Keratinocyte (primary cell): ENCODE measurements at regions of chr9 and their contacts with region 1.

Region 1: GRCh38 chr9:94213511-94214124 is 45.5 kb upstream of the ZNF169 start:
- DNase-seq: peak; percentile 11
- H3K4me3 ChIP-seq: no peak overlapping the region
- H3K27ac ChIP-seq: no peak overlapping the region
- H3K4me1 ChIP-seq: no peaks in the 10 kb centered on the region
- H3K27me3 ChIP-seq: no peaks in the 10 kb centered on the region
- CTCF ChIP-seq: peak; percentile 55 to 92 (median 84)

Region 2: DNA sequence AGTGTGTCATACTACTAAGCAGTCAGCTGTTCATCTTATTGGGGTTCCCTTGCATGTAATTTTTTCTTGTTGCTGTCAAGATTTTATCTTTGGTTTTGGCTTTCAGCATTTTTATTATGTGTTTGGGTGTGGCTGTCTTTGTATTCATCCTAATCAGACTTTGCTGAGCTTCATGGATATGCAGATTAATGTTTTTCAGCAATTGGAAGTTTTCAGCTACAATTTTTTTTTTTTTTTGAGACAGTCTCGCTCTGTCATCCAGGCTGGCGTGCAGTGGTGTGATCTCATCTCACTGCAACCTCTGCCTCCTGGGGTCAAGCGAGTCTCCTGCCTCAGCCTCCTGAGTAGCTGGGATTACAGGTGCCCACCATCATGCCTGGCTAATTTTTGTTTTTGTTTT is 367.3 kb before region 1 on chr9:
- dilution Hi-C with region 1: no loop called
- DNase-seq: no peak
- H3K4me3 ChIP-seq: no peak overlapping the region
- H3K27ac ChIP-seq: no peak overlapping the region
- H3K4me1 ChIP-seq: no peaks in the 10 kb centered on the region
- H3K27me3 ChIP-seq: no peaks in the 10 kb centered on the region
- CTCF ChIP-seq: no peak

Region 3: GRCh38 chr9:94002316-94003140 is 211.1 kb before region 1 on chr9:
- dilution Hi-C with region 1: loop called (anchors 25 kb)
- DNase-seq: no peak
- H3K4me3 ChIP-seq: no peak overlapping the region
- H3K27ac ChIP-seq: no peak overlapping the region
- H3K4me1 ChIP-seq: no peaks in the 10 kb centered on the region
- H3K27me3 ChIP-seq: no peaks in the 10 kb centered on the region
- CTCF ChIP-seq: peak; percentile 62 to 80 (median 73)